ENCODE measurements at regions of chr11 and their contacts with region 1.

Region 1: GRCh38 chr11:67630228-67630942 is 648 bp upstream of the NUDT8 start:
- DNase-seq: peak; percentile 99
- CTCF ChIP-seq: peak; percentile 61

Region 2: GRCh38 chr11:67556244-67556643 is 74.1 kb before region 1 on chr11:
- CTCF ChIA-PET with region 1: no interaction called
- POLR2A ChIA-PET with region 1: no interaction called
- DNase-seq: no peak
- CTCF ChIP-seq: no peak

Region 3: GRCh38 chr11:67583247-67584204 is 46.9 kb before region 1 on chr11 and contains the start of gene GSTP1:
- CTCF ChIA-PET with region 1: interaction called, 28 read pairs
- POLR2A ChIA-PET with region 1: interaction called, 3 read pairs
- DNase-seq: peak; percentile 91
- CTCF ChIP-seq: peak; percentile 66

Region 4: GRCh38 chr11:67613960-67614715 is 16.2 kb before region 1 on chr11:
- CTCF ChIA-PET with region 1: interaction called, 64 read pairs
- POLR2A ChIA-PET with region 1: interaction called, 6 read pairs
- DNase-seq: peak; percentile 87
- CTCF ChIP-seq: peak; percentile 40

Region 5: DNA sequence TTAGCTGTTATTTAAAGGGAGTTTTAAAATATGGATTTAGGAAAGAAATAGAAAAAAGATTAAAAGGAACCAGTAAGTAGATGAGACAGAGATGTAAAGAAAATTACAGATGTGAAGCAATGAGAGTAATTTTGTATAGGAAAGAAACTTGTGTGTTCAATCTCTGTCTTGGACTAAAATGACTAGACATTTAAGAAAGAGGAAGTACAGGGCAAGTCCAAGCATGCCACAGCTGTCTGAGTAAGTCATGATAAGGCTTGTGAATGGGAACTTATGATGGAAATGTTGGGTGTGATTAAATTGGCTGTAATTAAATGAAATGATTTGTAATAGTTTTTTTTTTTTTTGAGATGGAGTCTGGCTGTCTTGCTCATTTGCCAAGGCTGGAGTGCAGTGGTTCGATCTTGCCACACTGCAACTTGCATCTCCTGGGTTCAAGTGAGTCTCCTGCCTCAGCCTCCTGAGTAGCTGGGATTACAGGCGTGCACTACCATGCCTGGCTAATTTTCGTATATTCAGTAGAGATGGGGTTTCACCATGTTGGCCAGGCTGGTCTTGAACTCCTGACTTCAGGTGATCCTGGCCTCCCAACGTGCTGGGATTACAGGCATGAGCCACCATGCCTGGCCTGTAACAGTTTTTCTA is 26.0 kb after region 1 on chr11:
- CTCF ChIA-PET with region 1: interaction called, 142 read pairs
- POLR2A ChIA-PET with region 1: no interaction called
- DNase-seq: no peak
- CTCF ChIP-seq: no peak

Region 6: GRCh38 chr11:67674442-67674901 is 44.1 kb after region 1 on chr11 and contains the start of gene ALDH3B2:
- CTCF ChIA-PET with region 1: interaction called, 17 read pairs
- POLR2A ChIA-PET with region 1: no interaction called
- DNase-seq: no peak
- CTCF ChIP-seq: no peak